ENCODE measurements at regions of chr11 and their contacts with region 1.

Region 1: GRCh38 chr11:118051611-118052461 is 25.0 kb upstream of the TMPRSS4 start:
- DNase-seq: peak in 1 of 2 donors; percentile 38
- ATAC-seq: no peak
- H3K4me3 ChIP-seq: no peak overlapping the region
- H3K27ac ChIP-seq: no peak overlapping the region
- H3K4me1 ChIP-seq: no peaks in the 10 kb centered on the region
- H3K27me3 ChIP-seq: no peaks in the 10 kb centered on the region
- CTCF ChIP-seq: no peak

Region 2: GRCh38 chr11:117426269-117426685 is 625.6 kb before region 1 on chr11:
- intact Hi-C with region 1: loop called in 1 of 2 experiments (anchors 2 kb)
- DNase-seq: peak; percentile 62 to 79
- ATAC-seq: peak; percentile 49 to 71 (median 59)
- H3K4me3 ChIP-seq: no peak overlapping the region
- H3K27ac ChIP-seq: no peak overlapping the region
- H3K4me1 ChIP-seq: no peaks in the 10 kb centered on the region
- H3K27me3 ChIP-seq: peaks cover 0 to 4% (median 2%) of the 10 kb centered on the region in 3 donors
- CTCF ChIP-seq: peak; percentile 89

Region 3: DNA sequence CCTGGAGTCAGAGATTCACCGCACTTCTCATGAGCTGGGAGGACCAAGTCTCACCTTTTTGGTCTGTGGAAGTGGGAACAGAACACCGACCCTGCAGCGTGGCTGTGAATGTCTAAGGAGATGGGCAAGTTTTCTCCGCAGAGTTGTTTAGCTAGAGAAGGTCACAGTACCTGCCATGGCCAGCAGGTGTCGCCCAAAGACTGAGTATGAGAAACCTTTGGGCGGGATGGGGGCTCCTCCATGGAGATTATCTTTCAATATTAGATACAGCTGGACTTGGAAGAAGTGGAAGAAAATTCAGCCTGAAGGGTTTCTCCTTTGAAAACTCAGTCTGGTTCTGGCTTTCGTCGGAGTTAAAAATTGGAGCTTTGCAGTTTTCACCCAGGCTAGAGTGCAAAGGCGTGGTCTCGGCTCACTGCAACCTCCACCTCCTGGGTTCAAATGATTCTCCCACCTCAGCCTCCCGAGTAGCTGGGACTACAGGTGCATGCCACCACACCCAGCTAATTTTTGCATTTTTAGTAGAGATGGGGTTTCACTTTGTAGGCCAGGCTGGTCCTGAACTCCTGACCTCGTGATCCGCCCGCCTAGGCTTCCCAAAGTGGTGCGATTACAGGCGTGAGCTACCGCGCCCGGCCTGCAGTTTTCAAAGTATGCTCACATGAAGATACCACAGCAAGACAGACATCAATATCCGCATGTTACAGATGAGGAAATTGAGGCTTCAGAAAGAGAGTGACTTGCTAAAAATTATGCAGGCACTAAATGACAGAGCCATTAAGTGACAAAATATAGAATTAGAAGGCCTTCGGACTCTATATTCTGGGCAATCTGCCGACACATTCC is 244.1 kb before region 1 on chr11:
- intact Hi-C with region 1: loop called (anchors 2 to 5 kb)
- DNase-seq: peak; percentile 74 to 84
- ATAC-seq: peak; percentile 70 to 79 (median 75)
- H3K4me3 ChIP-seq: no peak overlapping the region
- H3K27ac ChIP-seq: no peak overlapping the region
- H3K4me1 ChIP-seq: no peaks in the 10 kb centered on the region
- H3K27me3 ChIP-seq: peaks cover 0 to 10% (median 0%) of the 10 kb centered on the region in 3 donors
- CTCF ChIP-seq: peak; percentile 93

Region 4: DNA sequence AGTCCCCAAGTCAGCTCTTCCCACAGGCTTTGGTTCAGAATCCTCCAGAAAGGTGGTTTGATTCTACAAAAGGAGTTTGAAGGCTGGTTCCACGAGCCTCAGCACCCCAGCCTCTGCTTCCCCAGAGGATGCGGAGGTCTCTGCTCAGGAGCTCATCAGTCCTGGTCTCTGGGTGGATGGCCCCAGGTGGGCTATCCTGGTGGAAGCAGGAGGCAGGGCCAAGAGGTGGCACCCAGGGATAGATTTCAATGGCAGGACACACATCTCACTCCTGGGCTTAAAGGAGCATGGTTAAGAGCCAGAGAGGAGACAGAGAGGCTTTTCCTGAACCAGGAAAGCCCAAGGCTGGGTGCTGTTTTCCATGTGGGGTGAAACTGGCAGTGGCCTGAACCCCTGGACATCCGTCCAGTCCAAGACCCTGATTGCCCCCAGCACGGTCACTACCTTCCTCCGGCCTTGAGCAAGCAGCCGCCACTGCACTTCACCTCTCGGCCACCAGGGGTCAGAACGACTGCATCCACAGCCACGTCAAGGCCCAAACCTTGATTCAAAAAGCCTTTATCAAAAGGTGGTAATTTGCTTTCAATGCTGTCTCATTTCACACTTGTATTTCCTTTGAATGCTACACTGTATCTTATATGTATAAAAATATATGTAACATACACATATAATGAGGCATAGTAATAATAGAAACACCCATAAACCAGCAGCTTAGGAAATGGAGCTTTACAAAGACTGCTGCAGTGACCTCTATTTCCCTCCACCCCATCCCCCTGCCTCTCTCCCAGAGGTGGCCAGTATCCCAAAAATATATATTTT is 208.0 kb before region 1 on chr11:
- intact Hi-C with region 1: loop called (anchors 5 kb)
- DNase-seq: peak; percentile 77 to 87
- ATAC-seq: peak; percentile 82 to 92 (median 83)
- H3K4me3 ChIP-seq: no peak overlapping the region
- H3K27ac ChIP-seq: no peak overlapping the region
- H3K4me1 ChIP-seq: no peaks in the 10 kb centered on the region
- H3K27me3 ChIP-seq: no peaks in the 10 kb centered on the region
- CTCF ChIP-seq: peak; percentile 99

Measured in psoas muscle (tissue), 8 donors.